Spleen (tissue), 13 donors: ENCODE measurements at regions of chr7 and their contacts with region 1.

Region 1: DNA sequence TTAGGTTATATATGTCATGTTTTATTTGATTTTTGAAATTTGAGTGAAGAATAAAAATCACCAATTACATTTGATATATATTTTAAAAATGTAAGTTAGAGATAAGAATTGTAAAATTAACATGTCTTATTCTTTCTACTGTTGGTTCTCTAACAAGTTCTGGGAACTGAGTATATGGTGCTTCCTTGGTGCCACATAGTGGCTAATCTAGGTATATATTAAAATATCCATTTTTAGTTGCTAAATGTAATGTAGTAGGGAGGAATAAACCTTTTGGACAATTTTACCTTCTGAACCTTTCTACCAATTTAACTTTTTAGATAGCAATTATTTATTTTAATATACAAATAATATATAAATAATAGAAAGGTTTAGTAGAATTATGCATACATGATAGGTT is 17.5 kb downstream of the CFAP69 start:
- DNase-seq: no peak
- H3K4me3 ChIP-seq: no peak overlapping the region
- H3K27ac ChIP-seq: no peak overlapping the region
- H3K4me1 ChIP-seq: no peaks in the 10 kb centered on the region
- H3K27me3 ChIP-seq: no peaks in the 10 kb centered on the region
- CTCF ChIP-seq: peak in 7 of 11 experiments; percentile 13 to 40 (median 36)
- POLR2A ChIP-seq: no peak

Region 2: DNA sequence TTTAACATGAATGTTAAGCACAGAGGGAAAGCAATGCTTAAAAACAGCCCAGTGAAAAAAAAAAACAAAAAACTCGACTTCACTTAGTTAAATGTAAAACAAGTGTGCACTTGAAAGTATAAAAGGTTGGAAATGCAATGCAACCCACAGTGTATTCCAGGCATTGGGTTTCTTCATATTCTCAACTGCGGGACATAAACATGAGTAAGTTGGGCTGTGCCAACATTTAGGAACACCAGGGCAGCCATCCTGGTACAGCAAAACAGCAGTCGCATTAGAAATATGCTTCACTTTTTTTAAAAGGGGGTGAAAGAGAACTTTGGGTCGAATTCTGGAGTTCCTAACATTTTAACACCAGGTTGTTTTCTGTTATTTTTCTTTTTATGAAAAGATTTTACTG is 107.2 kb before region 1 on chr7:
- intact Hi-C with region 1: loop called (anchors 10 kb)
- DNase-seq: no peak
- H3K4me3 ChIP-seq: no peak overlapping the region
- H3K27ac ChIP-seq: no peak overlapping the region
- H3K4me1 ChIP-seq: peaks cover 0 to 12% (median 10%) of the 10 kb centered on the region in 6 donors
- H3K27me3 ChIP-seq: peaks cover 0 to 19% (median 0%) of the 10 kb centered on the region in 7 donors
- CTCF ChIP-seq: no peak
- POLR2A ChIP-seq: no peak

Region 3: GRCh38 chr7:90334193-90334843 is 71.9 kb after region 1 on chr7:
- intact Hi-C with region 1: no loop called
- DNase-seq: no peak
- H3K4me3 ChIP-seq: no peak overlapping the region
- H3K27ac ChIP-seq: no peak overlapping the region
- H3K4me1 ChIP-seq: no peaks in the 10 kb centered on the region
- H3K27me3 ChIP-seq: no peaks in the 10 kb centered on the region
- CTCF ChIP-seq: no peak
- POLR2A ChIP-seq: no peak